H1 (cell line): ENCODE measurements at regions of chr17 and their contacts with region 1.

Region 1: DNA sequence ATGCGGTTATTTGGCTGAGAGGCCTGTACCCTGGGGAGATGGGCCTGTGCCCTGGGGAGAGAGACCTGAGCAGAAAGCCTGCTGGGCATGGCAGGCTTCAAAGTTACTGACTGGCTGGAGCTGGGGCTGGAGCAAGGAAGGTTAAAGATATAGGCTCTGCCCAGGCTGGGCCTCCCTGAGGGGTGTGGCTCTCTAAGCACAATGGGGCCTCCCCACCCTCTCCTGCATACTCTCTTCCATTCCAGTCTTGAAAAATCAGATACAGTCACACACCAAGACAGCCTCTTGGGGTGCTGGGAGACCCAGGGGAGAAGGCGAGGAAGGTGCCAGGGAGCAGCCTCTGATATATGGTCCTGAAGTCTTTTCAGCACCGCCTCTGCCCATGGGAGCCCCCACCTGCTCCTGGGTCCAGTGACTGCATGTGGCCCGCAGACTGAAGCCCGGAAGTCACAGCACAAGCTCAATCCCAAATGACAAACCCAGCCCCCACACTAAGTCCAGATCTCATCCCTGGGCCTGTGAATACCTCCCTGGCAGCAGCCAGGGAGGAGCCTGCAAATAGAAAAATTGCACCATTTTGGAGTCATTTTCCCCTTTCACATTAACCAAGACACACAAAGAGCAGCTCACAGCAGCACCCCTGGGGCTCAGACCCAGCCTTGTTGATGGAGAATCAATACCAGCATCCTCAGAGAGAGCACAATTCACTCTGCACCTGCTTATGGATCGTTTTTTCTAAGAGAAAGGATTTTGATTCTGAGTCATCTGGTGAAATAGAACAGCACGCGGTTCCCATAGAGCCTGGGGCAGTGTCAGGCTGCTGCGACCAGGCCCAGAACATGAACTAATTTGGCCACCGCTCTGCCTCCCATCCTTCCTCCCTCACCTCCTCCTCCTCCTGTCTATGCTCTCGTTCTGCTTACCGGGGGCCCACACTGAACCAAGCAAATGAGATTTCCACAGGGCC is 25.6 kb upstream of the CACNG1 start:
- DNase-seq: no peak
- H3K4me3 ChIP-seq: no peak overlapping the region
- H3K27ac ChIP-seq: no peak overlapping the region
- H3K4me1 ChIP-seq: no peaks in the 10 kb centered on the region; a peak in 1 of 7 replicates
- H3K27me3 ChIP-seq: no peaks in the 10 kb centered on the region
- CTCF ChIP-seq: no peak
- EP300 ChIP-seq: no peak
- POLR2A ChIP-seq: no peak
- RAD21 ChIP-seq: no peak

Region 2: DNA sequence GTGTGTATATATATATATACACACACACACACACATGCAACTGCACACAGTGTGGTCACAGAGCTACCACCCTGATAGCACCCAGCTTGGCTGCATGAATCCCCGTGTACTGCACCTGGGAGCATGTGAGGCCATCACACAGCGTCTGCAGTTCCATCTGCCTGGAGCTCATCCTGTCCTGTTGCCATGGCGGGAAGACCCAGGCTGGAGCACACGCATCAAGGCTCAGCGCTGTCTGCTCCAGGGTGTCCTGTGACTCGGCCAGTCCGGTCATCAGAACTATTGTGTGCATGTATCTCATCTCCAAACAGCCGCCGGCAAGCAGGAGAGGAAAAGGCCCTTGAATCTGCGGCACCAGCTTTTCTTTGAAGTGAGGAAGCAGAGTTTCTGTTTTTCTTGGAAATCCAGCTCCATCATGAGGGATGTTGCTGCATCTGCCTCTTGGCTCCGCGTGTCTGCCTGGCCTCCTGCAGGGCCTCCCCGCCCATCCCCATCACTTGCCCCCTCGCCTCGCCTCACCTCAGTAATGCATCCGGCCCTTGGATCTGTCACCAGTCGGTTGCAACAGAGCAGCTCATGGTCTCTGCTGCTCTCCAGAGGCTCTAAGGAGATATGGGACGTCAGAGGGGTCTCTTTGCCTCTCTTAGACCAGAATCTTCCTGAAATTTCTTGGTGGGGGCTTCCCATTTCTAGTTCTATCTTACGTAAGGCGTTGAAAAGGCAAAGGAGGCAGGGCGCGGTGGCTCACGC is 30.5 kb before region 1 on chr17:
- CTCF ChIA-PET with region 1: interaction called, 17 read pairs
- POLR2A ChIA-PET with region 1: no interaction called
- DNase-seq: no peak
- H3K4me3 ChIP-seq: no peak overlapping the region
- H3K27ac ChIP-seq: no peak overlapping the region
- H3K4me1 ChIP-seq: peaks cover 0 to 6% (median 3%) of the 10 kb centered on the region in 4 experiments; a peak in 3 of 7 replicates
- H3K27me3 ChIP-seq: no peaks in the 10 kb centered on the region
- CTCF ChIP-seq: peak in 2 of 3 experiments; percentile 1 to 14; a peak in 1 of 4 replicates
- EP300 ChIP-seq: no peak
- POLR2A ChIP-seq: no peak
- RAD21 ChIP-seq: peak; percentile 41 to 66; a peak in 3 of 4 replicates

Region 3: GRCh38 chr17:67004181-67004580 is 14.6 kb before region 1 on chr17:
- CTCF ChIA-PET with region 1: interaction called, 28 read pairs
- POLR2A ChIA-PET with region 1: no interaction called
- DNase-seq: no peak
- H3K4me3 ChIP-seq: no peak overlapping the region
- H3K27ac ChIP-seq: no peak overlapping the region
- H3K4me1 ChIP-seq: no peaks in the 10 kb centered on the region
- H3K27me3 ChIP-seq: no peaks in the 10 kb centered on the region
- CTCF ChIP-seq: no peak
- EP300 ChIP-seq: no peak
- POLR2A ChIP-seq: no peak
- RAD21 ChIP-seq: no peak

Region 4: DNA sequence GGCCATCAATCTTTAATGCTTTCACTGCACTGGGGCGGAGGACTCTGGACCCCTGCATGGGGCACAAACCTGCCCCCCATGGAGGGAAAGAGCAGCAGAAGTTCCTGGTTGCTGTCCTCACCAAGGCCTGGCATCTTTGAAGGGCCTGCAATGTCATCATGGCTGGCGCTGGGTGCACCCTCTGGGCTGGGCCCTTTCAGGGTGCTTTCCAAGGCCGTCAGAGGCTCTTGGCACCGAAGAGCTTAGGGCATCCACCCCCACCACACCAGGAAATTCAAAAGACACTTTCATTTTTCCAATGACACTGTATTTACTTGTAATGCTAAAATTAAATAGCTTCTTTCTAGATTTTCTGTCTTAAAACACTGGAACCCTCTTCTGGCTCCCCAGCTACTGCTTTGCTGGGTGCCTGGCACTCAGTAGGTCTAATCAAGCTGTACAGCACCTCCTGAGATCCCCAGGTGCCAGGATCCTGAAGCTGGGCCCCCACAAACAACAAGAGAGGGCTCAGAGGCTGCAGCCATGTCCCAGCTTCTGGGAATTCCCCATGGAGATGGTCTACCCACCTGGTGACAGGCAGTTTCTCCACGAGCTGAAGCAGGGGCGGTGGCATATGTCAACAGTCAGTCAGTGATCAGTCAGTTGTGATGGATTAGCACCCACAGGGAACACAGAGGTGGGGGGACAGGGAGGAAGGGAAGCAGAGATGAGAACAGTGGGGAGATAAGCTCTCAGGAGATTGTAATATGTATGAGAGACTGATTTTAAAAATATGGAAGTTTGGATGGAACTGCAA is 23.5 kb after region 1 on chr17:
- CTCF ChIA-PET with region 1: interaction called, 15 read pairs
- POLR2A ChIA-PET with region 1: no interaction called
- DNase-seq: no peak
- H3K4me3 ChIP-seq: no peak overlapping the region
- H3K27ac ChIP-seq: no peak overlapping the region
- H3K4me1 ChIP-seq: 0 out of 7 replicates have a peak, but pooled peaks cover 0 to 3% (median under 1%) of the 10 kb centered on the region in 4 experiments
- H3K27me3 ChIP-seq: no peaks in the 10 kb centered on the region
- CTCF ChIP-seq: no peak
- EP300 ChIP-seq: no peak
- POLR2A ChIP-seq: no peak
- RAD21 ChIP-seq: no peak

Region 5: GRCh38 chr17:67090341-67090740 is 71.6 kb after region 1 on chr17:
- CTCF ChIA-PET with region 1: no interaction called
- POLR2A ChIA-PET with region 1: no interaction called
- DNase-seq: no peak
- H3K4me3 ChIP-seq: no peak overlapping the region
- H3K27ac ChIP-seq: no peak overlapping the region
- H3K4me1 ChIP-seq: no peaks in the 10 kb centered on the region
- H3K27me3 ChIP-seq: no peaks in the 10 kb centered on the region
- CTCF ChIP-seq: no peak
- EP300 ChIP-seq: no peak
- POLR2A ChIP-seq: no peak
- RAD21 ChIP-seq: no peak